ENCODE measurements at regions of chr11 and their contacts with region 1.

Region 1: DNA sequence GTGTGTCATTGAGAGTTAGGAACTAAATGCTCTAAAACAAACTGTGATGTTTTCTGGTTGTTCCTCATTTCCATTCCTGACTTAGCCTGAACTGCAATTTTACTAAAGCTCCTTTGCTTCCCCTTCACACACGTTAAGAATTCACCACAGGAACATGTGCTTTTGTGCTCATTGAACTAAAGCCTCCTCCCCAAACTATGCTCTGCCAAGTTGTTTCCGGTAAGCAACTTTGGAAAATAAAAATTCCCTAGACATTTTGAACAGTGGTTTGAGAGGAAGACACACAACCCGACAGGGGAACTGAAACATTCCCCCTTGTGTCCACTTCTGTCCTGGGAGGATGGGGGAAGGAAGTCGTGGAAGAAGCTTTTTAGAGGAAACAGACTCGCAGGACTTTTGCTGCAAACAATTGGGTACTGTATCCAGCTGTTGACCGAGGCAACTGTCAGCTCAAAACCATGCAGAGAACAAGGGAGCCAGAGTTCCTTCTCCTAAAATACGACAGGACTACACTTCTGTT is 66.9 kb downstream of the GAB2 start:
- DNase-seq: no peak
- ATAC-seq: peak; percentile 63
- H3K4me3 Mint-ChIP-seq: peak overlapping the region; percentile 65
- H3K27ac Mint-ChIP-seq: peak overlapping the region; percentile 89
- H3K4me1 Mint-ChIP-seq: peaks cover 74% of the 10 kb centered on the region
- H3K27me3 Mint-ChIP-seq: no peaks in the 10 kb centered on the region
- CTCF ChIP-seq: no peak

Region 2: GRCh38 chr11:78244546-78245255 is 106.0 kb before region 1 on chr11:
- CTCF ChIA-PET with region 1: no interaction called
- POLR2A ChIA-PET with region 1: interaction called, 13 read pairs
- intact Hi-C with region 1: no loop called
- DNase-seq: no peak
- ATAC-seq: no peak
- H3K4me3 Mint-ChIP-seq: no peak overlapping the region
- H3K27ac Mint-ChIP-seq: no peak overlapping the region
- H3K4me1 Mint-ChIP-seq: peaks cover 14% of the 10 kb centered on the region
- H3K27me3 Mint-ChIP-seq: no peaks in the 10 kb centered on the region
- CTCF ChIP-seq: no peak

Region 3: DNA sequence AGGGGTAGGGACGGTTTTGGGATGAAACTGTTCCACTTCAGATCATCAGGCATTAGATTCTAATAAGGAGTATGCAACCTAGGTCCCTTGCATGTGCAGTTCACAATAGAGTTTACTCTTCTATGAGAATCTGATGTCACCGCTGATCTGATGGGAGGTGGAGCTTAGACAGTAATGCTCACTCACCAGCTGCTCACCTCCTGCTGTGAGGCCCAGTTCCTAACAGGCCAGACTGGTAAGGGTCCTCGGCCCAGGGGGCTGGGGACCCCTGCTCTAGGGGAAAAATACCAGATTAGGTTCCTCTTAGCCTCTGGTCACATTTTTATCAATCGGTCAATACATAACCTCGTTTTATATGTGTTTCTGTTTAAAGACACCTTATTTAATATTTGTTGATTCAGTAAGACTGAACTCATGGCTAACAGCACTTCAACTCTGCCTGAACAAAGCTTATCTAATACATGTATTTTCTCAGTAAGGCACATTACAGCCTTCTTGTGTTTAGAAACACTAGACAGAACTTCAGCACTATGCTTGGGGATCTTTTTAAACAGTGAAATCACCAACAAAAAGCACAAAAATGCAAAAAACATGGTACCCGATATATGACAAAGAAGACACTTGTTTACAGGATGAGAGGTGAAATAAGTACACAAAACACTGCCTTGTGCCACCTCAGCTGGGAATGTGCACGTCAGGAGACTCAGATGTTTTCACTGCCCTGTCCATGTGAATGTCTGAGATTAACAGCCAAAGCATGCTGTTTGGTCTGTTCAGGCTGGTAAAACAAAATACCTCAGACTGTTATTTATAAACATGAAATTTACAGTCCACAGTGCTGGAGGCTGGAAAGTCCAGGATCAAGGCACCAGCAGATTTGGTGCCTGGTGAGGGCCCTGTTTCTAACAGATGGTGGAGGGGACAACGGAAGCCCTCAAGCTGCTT is 54.4 kb before region 1 on chr11:
- CTCF ChIA-PET with region 1: no interaction called
- POLR2A ChIA-PET with region 1: no interaction called
- intact Hi-C with region 1: loop called (anchors 5 kb)
- DNase-seq: no peak
- ATAC-seq: no peak
- H3K4me3 Mint-ChIP-seq: no peak overlapping the region
- H3K27ac Mint-ChIP-seq: no peak overlapping the region
- H3K4me1 Mint-ChIP-seq: peaks cover 15% of the 10 kb centered on the region
- H3K27me3 Mint-ChIP-seq: no peaks in the 10 kb centered on the region
- CTCF ChIP-seq: no peak

Region 4: GRCh38 chr11:78338138-78338537 is 12.6 kb before region 1 on chr11:
- CTCF ChIA-PET with region 1: interaction called, 3 read pairs
- POLR2A ChIA-PET with region 1: interaction called, 7 read pairs
- intact Hi-C with region 1: loop called (anchors 1 kb)
- DNase-seq: no peak
- ATAC-seq: no peak
- H3K4me3 Mint-ChIP-seq: no peak overlapping the region
- H3K27ac Mint-ChIP-seq: no peak overlapping the region
- H3K4me1 Mint-ChIP-seq: peaks cover 37% of the 10 kb centered on the region
- H3K27me3 Mint-ChIP-seq: no peaks in the 10 kb centered on the region
- CTCF ChIP-seq: no peak